Activated CD4-positive, alpha-beta T cell treated with anti-CD3 and anti-CD28 coated beads, Interleukin-2, amount 10 ng/mL, durations not matched to agents 24 days and 14 days (primary cell): ENCODE measurements at regions of chr14 and their contacts with region 1.

Region 1: DNA sequence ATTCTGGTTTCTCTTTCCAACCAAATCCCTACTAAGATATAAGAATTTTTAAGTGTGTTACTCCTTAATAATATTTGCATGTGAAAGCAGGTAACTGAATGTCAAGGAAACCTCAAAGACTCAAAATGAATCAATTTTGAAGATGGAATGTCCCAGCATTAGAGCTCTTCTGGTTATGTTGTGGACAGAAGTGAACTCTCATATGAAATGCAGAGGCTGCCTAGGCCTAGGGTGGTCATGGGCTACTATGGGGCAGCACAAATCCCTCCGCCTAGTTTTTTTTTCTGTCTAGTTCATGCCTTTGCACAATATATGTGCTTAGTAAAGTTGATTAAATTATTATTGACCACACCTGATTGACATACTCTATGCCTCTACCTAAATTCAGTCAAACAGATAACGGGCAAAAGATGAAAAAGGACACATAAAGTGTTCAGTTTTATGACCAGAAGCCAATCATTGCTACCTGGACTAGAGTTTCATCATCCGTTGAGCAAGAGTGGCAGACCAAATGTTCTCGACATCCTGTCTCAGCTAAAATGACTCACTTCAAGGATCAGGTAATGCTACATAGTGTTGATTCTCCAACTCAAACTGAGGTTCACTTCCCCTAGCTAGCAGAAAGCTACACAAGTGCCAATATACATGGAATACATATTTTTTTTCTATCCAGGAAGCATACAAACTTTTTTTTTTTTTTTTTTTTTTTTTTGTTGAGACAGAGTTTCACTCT is 1211.4 kb downstream of the VRK1 start:
- DNase-seq: peak; percentile 67
- H3K4me3 Mint-ChIP-seq: no peak overlapping the region
- H3K27ac Mint-ChIP-seq: peak overlapping the region; percentile 2
- H3K4me1 Mint-ChIP-seq: peaks cover 10% of the 10 kb centered on the region
- H3K27me3 Mint-ChIP-seq: no peaks in the 10 kb centered on the region

Region 2: DNA sequence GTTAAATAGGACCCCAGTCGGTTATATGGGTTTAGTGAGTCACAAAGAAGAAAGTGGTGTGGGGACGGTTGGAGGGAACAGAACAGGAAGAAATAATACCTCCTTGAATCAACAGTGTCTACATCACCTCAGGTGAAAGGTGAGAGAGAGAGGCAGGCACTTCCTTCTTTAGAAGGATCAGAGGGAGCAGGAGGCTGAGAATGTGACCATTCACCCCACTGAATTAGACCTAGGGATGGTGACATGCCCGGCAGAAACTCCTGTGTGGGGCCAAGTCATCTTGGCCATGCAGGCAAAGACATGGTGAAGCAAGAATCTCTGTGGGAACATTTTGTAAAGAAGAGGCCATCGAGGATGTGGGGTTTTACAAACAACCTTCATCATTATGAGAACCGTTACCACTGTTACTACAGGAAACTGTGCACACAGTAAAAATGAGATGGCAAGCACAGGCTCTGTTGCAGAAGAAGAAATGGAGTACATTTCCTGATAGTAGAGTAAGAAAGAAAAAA is 14.5 kb before region 1 on chr14:
- intact Hi-C with region 1: loop called (anchors 1 kb)
- DNase-seq: peak; percentile 82
- H3K4me3 Mint-ChIP-seq: peak overlapping the region; percentile 37
- H3K27ac Mint-ChIP-seq: peak overlapping the region; percentile 84
- H3K4me1 Mint-ChIP-seq: peaks cover 34% of the 10 kb centered on the region
- H3K27me3 Mint-ChIP-seq: no peaks in the 10 kb centered on the region